Psoas muscle (tissue), 8 donors: ENCODE measurements at regions of chr6 and their contacts with region 1.

Region 1: GRCh38 chr6:57316581-57317059 is 810 bp upstream of the PRIM2 start:
- DNase-seq: peak; percentile 78 to 85
- ATAC-seq: peak; percentile 88 to 93 (median 89)
- H3K4me3 ChIP-seq: peak overlapping the region; percentile 64
- H3K27ac ChIP-seq: peak overlapping the region; percentile 20
- H3K4me1 ChIP-seq: no peaks in the 10 kb centered on the region
- H3K27me3 ChIP-seq: no peaks in the 10 kb centered on the region
- CTCF ChIP-seq: peak; percentile 80

Region 2: DNA sequence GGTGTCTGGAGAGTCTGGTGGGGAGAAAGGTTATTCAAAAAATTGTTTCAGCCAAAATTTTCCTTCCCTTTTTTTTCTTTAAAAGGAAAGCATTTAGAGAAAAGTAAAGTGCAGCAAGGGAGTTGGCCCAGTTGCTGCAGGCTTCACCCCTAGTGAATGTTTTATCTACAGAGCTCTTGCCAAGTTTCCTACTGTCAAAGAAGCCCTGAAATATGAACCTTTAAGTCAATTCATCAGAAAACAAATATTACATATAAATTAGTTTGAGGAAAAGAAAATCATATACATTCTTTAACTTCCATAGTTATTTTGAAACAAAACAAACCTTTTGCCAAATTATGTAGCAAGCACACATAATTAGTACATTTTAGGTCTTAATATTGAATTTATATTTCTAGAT is 1712.6 kb before region 1 on chr6:
- intact Hi-C with region 1: no loop called
- DNase-seq: no peak
- ATAC-seq: no peak
- H3K4me3 ChIP-seq: no peak overlapping the region
- H3K27ac ChIP-seq: no peak overlapping the region
- H3K4me1 ChIP-seq: no peaks in the 10 kb centered on the region
- H3K27me3 ChIP-seq: peaks cover 0 to 2% (median 0%) of the 10 kb centered on the region in 3 donors
- CTCF ChIP-seq: no peak

Region 3: DNA sequence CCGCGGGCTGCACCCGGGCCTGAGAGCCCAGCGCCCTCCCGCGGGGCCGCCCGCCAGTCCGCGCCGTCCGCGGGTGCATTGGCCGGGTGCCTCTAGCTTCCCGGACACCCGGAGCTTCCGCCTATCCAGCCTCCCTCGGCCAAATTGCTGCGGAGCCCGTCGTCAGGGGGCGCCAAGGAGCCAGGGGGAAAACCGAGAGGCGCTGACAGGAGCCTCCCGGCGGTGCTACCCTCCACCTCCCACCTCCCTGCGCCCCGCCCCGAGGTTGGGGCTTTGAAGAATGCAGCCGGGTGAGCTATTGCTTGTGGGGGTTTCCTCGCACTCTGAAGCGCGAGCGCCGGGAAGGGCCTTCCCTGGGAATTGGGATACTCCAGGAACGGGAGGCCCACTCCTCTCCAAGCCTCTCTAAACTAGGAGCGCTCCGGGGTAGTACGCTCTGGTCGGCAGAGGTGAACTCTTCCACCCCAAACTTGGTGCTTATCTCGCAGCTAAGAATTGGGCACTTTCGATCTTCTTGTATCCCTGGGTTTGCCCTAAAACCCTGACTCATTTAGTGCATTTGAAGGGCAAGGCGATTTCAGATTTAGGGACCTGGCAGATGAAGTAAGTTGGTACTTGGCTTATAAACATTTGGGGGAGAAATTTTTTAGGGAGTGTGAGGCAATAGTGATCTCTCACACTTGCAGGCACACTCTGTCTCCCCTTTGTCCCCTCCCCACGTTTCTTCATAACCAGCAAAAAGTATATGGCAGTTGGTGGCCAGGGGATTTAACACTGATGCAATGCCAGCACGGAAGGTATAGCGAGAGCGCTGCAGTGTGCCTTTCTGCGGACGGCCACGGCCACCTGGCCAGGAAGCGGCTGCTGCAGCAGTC is 361.2 kb before region 1 on chr6:
- intact Hi-C with region 1: loop called in 1 of 2 experiments (anchors 2 kb)
- DNase-seq: peak; percentile 81 to 90
- ATAC-seq: peak; percentile 84 to 97 (median 90)
- H3K4me3 ChIP-seq: peak overlapping the region; percentile 72
- H3K27ac ChIP-seq: peak overlapping the region; percentile 32
- H3K4me1 ChIP-seq: peaks cover 7% of the 10 kb centered on the region
- H3K27me3 ChIP-seq: no peaks in the 10 kb centered on the region
- CTCF ChIP-seq: peak; percentile 69

Region 4: GRCh38 chr6:57089687-57090460 is 226.7 kb before region 1 on chr6 and contains the start of gene ZNF451:
- intact Hi-C with region 1: loop called in 1 of 2 experiments (anchors 10 kb)
- DNase-seq: peak; percentile 98 to 99
- ATAC-seq: peak; percentile 98 to 99 (median 98)
- H3K4me3 ChIP-seq: peak within 1 kb of the TSS; percentile 69
- H3K27ac ChIP-seq: peak within 1 kb of the TSS; percentile 84
- H3K4me1 ChIP-seq: peaks cover 31% of the 10 kb centered on the region
- H3K27me3 ChIP-seq: no peaks in the 10 kb centered on the region
- CTCF ChIP-seq: no peak
- total RNA-seq, gene ZNF451: 20.4 to 27.6 (median 23.7) TPM

Region 5: GRCh38 chr6:57177545-57178265 is 138.9 kb before region 1 on chr6:
- intact Hi-C with region 1: loop called (anchors 5 to 10 kb)
- DNase-seq: peak; percentile 44 to 65
- ATAC-seq: peak; percentile 25 to 64 (median 56)
- H3K4me3 ChIP-seq: peak overlapping the region; percentile 46
- H3K27ac ChIP-seq: peak overlapping the region; percentile 93
- H3K4me1 ChIP-seq: peaks cover 47% of the 10 kb centered on the region
- H3K27me3 ChIP-seq: no peaks in the 10 kb centered on the region
- CTCF ChIP-seq: no peak

Region 6: GRCh38 chr6:57201718-57202117 is 114.9 kb before region 1 on chr6:
- intact Hi-C with region 1: no loop called
- DNase-seq: no peak
- ATAC-seq: no peak
- H3K4me3 ChIP-seq: no peak overlapping the region
- H3K27ac ChIP-seq: no peak overlapping the region
- H3K4me1 ChIP-seq: no peaks in the 10 kb centered on the region
- H3K27me3 ChIP-seq: no peaks in the 10 kb centered on the region
- CTCF ChIP-seq: no peak

Region 7: GRCh38 chr6:57221936-57222742 is 94.5 kb before region 1 on chr6 and contains the start of gene RAB23:
- intact Hi-C with region 1: loop called in 1 of 2 experiments (anchors 5 kb)
- DNase-seq: peak; percentile 81 to 92
- ATAC-seq: peak; percentile 95 to 99 (median 98)
- H3K4me3 ChIP-seq: peak within 1 kb of the TSS; percentile 85
- H3K27ac ChIP-seq: peak within 1 kb of the TSS; percentile 44
- H3K4me1 ChIP-seq: peaks cover 7% of the 10 kb centered on the region
- H3K27me3 ChIP-seq: no peaks in the 10 kb centered on the region
- CTCF ChIP-seq: no peak
- total RNA-seq, gene RAB23: 5.9 to 10.1 (median 6.0) TPM